CD14-positive monocyte (primary cell): ENCODE measurements at regions of chr14 and their contacts with region 1.

Region 1: DNA sequence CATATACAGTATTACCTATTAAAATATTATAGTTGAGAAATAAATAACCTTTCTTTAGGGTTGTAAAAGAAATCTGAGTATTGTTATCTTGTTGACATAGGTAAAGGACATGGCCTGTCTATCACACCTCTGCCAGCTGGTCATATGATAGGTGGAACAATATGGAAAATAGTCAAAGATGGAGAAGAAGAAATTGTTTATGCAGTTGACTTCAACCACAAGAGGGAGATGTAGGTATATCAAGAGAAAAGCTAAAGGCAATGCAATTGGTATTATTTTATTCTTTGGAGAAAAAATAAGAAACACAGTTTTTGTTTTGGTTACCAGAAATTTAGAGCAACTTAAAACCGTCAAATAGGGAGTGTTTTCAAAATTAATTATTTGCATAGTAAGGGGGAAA is 13.5 kb downstream of the CPSF2 start:
- DNase-seq: peak; percentile 7 to 46 (median 33)
- H3K4me3 ChIP-seq: no peak overlapping the region
- H3K4me3 Mint-ChIP-seq: no peak overlapping the region
- H3K27ac ChIP-seq: no peak overlapping the region
- H3K27ac Mint-ChIP-seq: no peak overlapping the region
- H3K4me1 ChIP-seq: no peaks in the 10 kb centered on the region
- H3K4me1 Mint-ChIP-seq: peaks cover 4% of the 10 kb centered on the region
- H3K27me3 ChIP-seq: no peaks in the 10 kb centered on the region
- H3K27me3 Mint-ChIP-seq: no peaks in the 10 kb centered on the region
- CTCF ChIP-seq: peak; percentile 72

Region 2: DNA sequence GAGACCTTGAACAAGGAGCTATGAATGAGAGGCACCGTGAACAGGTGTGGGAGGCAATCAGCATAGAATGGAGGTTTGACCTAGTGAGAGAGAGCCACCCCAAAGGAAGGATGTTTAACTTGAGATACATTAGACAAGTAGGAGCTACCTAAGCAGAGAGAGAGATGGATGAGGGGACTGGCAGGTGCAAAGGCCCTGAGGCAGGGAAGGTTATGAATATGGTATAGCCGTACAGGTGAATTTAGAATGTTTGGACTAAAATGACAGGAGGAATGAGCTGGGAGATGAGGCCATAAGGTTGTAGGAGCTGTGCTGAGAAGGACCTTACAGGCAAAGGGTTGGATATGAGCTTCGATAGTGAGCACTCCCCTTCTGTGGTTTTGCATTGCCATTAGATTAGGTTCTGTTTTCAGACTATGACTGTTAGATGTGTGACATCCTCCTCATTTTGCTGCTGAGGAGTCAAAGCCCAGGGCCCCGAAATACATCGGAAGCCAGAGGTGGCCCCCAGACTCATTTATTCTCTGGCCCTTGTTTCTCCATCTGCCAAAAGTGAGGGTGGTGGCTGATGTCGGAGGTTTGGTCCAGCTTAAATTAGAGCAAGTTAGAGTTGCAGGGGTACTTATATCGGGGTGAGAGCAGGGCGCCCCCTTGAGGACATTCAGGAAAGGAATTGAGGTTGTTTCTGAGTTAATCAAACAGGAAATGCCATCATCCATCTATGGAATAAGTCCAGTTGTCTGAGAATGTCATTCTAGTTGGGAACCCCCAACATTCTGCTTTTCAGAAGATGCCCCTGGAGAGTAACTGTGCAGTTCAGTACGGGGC is 217.1 kb after region 1 on chr14:
- intact Hi-C with region 1: loop called in 1 of 2 experiments (anchors 5 kb)
- DNase-seq: peak; percentile 50 to 65 (median 65)
- H3K4me3 ChIP-seq: no peak overlapping the region
- H3K4me3 Mint-ChIP-seq: peak overlapping the region in 1 of 2 donors; percentile 50
- H3K27ac ChIP-seq: no peak overlapping the region
- H3K27ac Mint-ChIP-seq: peak overlapping the region in 1 of 7 donors; percentile 0
- H3K4me1 ChIP-seq: peaks cover 0 to 14% of the 10 kb centered on the region in 2 donors
- H3K4me1 Mint-ChIP-seq: peaks cover 36% of the 10 kb centered on the region
- H3K27me3 ChIP-seq: peaks cover 0 to 3% of the 10 kb centered on the region in 2 donors
- H3K27me3 Mint-ChIP-seq: peaks cover 0 to 18% (median 8%) of the 10 kb centered on the region in 3 donors
- CTCF ChIP-seq: peak; percentile 75

Region 3: GRCh38 chr14:92686900-92687444 is 551.7 kb after region 1 on chr14:
- intact Hi-C with region 1: loop called in 1 of 2 experiments (anchors 10 kb)
- DNase-seq: peak in 1 of 3 donors; percentile 38
- H3K4me3 ChIP-seq: no peak overlapping the region
- H3K4me3 Mint-ChIP-seq: no peak overlapping the region
- H3K27ac ChIP-seq: no peak overlapping the region
- H3K27ac Mint-ChIP-seq: peak overlapping the region in 1 of 7 donors; percentile 12
- H3K4me1 ChIP-seq: no peaks in the 10 kb centered on the region
- H3K4me1 Mint-ChIP-seq: peaks cover 6% of the 10 kb centered on the region
- H3K27me3 ChIP-seq: no peaks in the 10 kb centered on the region
- H3K27me3 Mint-ChIP-seq: peaks cover 0 to 4% (median 0%) of the 10 kb centered on the region in 3 donors
- CTCF ChIP-seq: peak; percentile 92